CD8-positive, alpha-beta T cell (primary cell): ENCODE measurements at regions of chr21 and their contacts with region 1.

Region 1: GRCh38 chr21:17949421-17949820 is 130.3 kb upstream of the C21orf91 start:
- DNase-seq: no peak
- ATAC-seq: no peak
- H3K4me3 ChIP-seq: no peak overlapping the region
- H3K4me3 Mint-ChIP-seq: no peak overlapping the region
- H3K27ac ChIP-seq: no peak overlapping the region
- H3K27ac Mint-ChIP-seq: no peak overlapping the region
- H3K4me1 ChIP-seq: no peaks in the 10 kb centered on the region
- H3K4me1 Mint-ChIP-seq: no peaks in the 10 kb centered on the region
- H3K27me3 ChIP-seq: no peaks in the 10 kb centered on the region
- H3K27me3 Mint-ChIP-seq: peaks cover 5% of the 10 kb centered on the region
- CTCF ChIP-seq: no peak

Region 2: GRCh38 chr21:17976139-17976538 is 26.7 kb after region 1 on chr21:
- CTCF ChIA-PET with region 1: no interaction called
- POLR2A ChIA-PET with region 1: no interaction called
- intact Hi-C with region 1: loop called in 1 of 2 experiments (anchors 1 kb)
- DNase-seq: no peak
- ATAC-seq: no peak
- H3K4me3 ChIP-seq: no peak overlapping the region
- H3K4me3 Mint-ChIP-seq: no peak overlapping the region
- H3K27ac ChIP-seq: no peak overlapping the region
- H3K27ac Mint-ChIP-seq: no peak overlapping the region
- H3K4me1 ChIP-seq: no peaks in the 10 kb centered on the region
- H3K4me1 Mint-ChIP-seq: no peaks in the 10 kb centered on the region
- H3K27me3 ChIP-seq: no peaks in the 10 kb centered on the region
- H3K27me3 Mint-ChIP-seq: no peaks in the 10 kb centered on the region
- CTCF ChIP-seq: no peak